Mucosa of descending colon (tissue), 3 donors: ENCODE measurements at regions of chr18 and their contacts with region 1.

Region 1: GRCh38 chr18:60295674-60296073 is 76.9 kb downstream of the MC4R start:
- DNase-seq: peak in 1 of 3 donors; percentile 6
- ATAC-seq: peak; percentile 79
- H3K4me3 ChIP-seq: no peak overlapping the region
- H3K4me1 ChIP-seq: no peaks in the 10 kb centered on the region
- CTCF ChIP-seq: no peak

Region 2: DNA sequence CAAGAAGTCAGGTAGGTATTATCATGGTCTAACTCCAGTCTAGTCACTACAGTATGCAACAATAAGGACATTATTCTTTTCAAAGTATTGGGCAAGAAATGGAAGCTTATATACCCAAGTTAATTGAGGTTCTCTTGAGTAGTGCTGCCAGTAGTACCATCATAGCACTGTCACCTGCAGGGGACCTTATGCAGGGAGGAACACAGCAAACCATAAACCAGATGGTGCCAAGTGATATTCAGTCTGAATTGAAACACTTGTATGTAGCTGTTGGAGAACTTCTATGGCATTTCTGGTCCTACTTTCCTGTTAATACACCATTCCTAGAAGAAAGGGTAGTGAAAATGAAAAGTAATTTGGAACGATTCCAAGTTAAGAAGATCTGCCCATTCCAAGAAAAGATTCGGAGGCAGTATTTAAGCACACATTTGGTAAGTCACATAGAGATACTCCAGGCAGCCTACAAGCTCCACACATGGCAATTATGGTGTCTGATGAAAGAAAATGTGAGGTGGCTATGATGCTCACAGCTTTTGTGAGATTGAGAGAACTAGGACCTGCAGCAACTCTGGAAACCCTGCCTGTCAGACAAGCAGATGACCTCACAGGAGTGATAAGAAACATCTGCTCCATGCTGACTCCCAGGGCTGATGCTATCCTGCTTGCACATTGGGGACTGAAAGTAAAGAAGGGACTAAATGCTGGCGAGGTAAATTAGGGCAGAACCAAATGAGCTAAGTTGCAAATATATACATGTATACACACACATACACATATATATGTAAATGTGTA is 97.8 kb before region 1 on chr18:
- intact Hi-C with region 1: no loop called
- DNase-seq: peak in 1 of 3 donors; percentile 2
- ATAC-seq: no peak
- H3K4me3 ChIP-seq: no peak overlapping the region
- H3K4me1 ChIP-seq: no peaks in the 10 kb centered on the region
- CTCF ChIP-seq: no peak

Region 3: DNA sequence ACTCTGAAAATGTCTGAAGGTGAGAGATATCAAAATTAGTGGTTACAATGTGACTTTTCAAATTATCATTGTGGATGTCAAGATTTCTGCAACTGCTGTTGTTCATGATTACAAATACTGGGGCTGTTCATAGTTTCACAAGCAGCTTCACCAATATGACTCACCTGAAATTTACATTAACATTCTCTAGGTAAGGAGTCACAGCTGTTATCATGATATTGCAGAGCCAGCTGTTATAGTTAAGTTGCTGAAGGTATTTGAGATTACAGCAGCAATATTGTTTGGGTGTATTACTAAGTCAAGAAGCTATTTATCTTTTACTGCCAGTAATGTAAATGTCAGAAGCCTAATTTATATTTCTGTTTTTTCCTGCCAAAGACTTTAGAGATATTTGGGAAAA is 63.1 kb before region 1 on chr18:
- intact Hi-C with region 1: loop called in 1 of 2 experiments (anchors 10 kb)
- DNase-seq: no peak
- ATAC-seq: peak; percentile 68
- H3K4me3 ChIP-seq: no peak overlapping the region
- H3K4me1 ChIP-seq: no peaks in the 10 kb centered on the region
- CTCF ChIP-seq: no peak

Region 4: GRCh38 chr18:61001138-61001537 is 705.5 kb after region 1 on chr18:
- intact Hi-C with region 1: no loop called
- DNase-seq: no peak
- ATAC-seq: no peak
- H3K4me3 ChIP-seq: no peak overlapping the region
- H3K4me1 ChIP-seq: no peaks in the 10 kb centered on the region
- CTCF ChIP-seq: no peak